ENCODE measurements at regions of chr11 and their contacts with region 1.

Region 1: DNA sequence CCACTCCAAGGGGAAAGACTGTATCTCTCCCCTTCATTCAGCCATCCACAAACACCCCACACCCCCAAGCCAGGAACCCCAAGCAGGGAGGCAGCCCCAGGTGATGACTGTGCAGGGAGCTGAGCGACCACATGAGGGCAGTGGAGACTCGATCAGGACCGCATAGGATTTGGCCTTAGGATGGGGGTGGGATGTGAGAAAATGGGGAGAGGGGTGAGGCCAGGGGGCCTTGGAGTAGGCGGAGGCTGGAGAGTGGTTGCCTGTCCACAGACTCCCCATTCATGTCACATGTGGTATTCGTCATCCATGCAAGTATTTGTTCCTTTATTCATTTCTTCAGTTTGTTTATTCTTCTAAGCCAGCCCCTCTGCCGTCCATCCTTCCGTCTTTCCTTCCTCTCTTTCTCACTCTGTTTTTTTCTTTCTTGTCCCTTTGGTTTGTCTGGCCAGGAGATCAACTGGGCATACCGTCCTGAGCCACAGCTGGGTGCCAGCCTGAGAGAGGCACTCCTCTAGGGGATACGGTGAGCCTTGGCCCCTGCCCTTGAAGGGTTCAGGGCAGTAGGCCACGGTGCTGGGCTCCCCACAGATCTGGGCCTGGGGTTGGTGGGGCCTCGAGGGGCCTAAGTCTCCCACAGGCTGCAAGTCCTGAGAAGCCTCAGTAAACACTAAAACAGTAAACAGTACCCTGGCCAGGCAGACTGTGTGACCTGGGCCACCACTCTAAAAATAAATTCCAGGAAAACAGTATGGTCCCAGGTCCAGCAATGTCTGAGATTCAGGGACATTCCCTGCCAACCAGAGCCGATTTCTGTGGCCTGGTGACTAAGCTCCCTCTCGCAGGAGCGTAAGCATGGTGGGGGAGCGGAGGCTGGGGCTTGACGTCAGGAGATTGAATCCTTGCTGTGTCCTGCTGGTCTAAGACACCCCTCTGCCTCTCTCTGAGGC is 2.5 kb upstream of the RHOD start:
- DNase-seq: peak; percentile 28
- H3K4me3 Mint-ChIP-seq: no peak overlapping the region
- H3K27ac Mint-ChIP-seq: no peak overlapping the region
- H3K4me1 Mint-ChIP-seq: peaks cover 11% of the 10 kb centered on the region
- H3K27me3 Mint-ChIP-seq: peaks cover 12% of the 10 kb centered on the region

Region 2: GRCh38 chr11:67071420-67072284 is 17.5 kb after region 1 on chr11:
- intact Hi-C with region 1: loop called (anchors 1 kb)
- DNase-seq: peak; percentile 65
- H3K4me3 Mint-ChIP-seq: peak overlapping the region; percentile 37
- H3K27ac Mint-ChIP-seq: no peak overlapping the region
- H3K4me1 Mint-ChIP-seq: no peaks in the 10 kb centered on the region
- H3K27me3 Mint-ChIP-seq: peaks cover 11% of the 10 kb centered on the region

Region 3: GRCh38 chr11:67082035-67082791 is 28.0 kb after region 1 on chr11:
- intact Hi-C with region 1: loop called (anchors 1 kb)
- DNase-seq: no peak
- H3K4me3 Mint-ChIP-seq: no peak overlapping the region
- H3K27ac Mint-ChIP-seq: peak overlapping the region; percentile 12
- H3K4me1 Mint-ChIP-seq: peaks cover 12% of the 10 kb centered on the region
- H3K27me3 Mint-ChIP-seq: peaks cover 2% of the 10 kb centered on the region

Region 4: DNA sequence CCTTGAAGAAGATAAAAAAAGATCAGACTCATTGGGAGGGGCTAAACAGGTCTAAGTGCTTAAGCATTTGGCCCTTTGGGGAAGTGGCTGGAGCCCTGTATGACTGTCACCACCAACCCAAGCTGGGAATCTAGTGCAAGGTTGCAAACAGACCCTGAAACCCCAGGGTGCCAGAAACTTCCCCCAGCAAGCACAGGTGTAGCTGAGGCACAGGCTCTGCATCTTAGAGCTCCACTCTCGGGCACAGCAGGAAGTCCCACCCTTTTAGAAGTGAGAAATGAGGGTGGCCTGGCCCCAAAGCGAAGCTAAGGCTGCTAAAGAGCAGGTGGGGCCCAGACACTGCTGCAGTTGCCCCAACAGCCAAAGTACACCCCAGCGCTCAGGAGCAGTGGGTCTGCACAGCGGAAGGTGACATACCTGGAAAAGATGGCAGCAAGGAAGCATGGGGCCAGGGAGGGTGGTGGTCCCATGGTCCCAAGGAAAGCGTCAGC is 59.1 kb after region 1 on chr11:
- intact Hi-C with region 1: no loop called
- DNase-seq: no peak
- H3K4me3 Mint-ChIP-seq: no peak overlapping the region
- H3K27ac Mint-ChIP-seq: no peak overlapping the region
- H3K4me1 Mint-ChIP-seq: peaks cover 7% of the 10 kb centered on the region
- H3K27me3 Mint-ChIP-seq: peaks cover 6% of the 10 kb centered on the region

Region 5: GRCh38 chr11:67158221-67158620 is 104.1 kb after region 1 on chr11:
- intact Hi-C with region 1: no loop called
- DNase-seq: no peak
- H3K4me3 Mint-ChIP-seq: no peak overlapping the region
- H3K27ac Mint-ChIP-seq: peak overlapping the region; percentile 53
- H3K4me1 Mint-ChIP-seq: peaks cover 17% of the 10 kb centered on the region
- H3K27me3 Mint-ChIP-seq: no peaks in the 10 kb centered on the region

Region 6: DNA sequence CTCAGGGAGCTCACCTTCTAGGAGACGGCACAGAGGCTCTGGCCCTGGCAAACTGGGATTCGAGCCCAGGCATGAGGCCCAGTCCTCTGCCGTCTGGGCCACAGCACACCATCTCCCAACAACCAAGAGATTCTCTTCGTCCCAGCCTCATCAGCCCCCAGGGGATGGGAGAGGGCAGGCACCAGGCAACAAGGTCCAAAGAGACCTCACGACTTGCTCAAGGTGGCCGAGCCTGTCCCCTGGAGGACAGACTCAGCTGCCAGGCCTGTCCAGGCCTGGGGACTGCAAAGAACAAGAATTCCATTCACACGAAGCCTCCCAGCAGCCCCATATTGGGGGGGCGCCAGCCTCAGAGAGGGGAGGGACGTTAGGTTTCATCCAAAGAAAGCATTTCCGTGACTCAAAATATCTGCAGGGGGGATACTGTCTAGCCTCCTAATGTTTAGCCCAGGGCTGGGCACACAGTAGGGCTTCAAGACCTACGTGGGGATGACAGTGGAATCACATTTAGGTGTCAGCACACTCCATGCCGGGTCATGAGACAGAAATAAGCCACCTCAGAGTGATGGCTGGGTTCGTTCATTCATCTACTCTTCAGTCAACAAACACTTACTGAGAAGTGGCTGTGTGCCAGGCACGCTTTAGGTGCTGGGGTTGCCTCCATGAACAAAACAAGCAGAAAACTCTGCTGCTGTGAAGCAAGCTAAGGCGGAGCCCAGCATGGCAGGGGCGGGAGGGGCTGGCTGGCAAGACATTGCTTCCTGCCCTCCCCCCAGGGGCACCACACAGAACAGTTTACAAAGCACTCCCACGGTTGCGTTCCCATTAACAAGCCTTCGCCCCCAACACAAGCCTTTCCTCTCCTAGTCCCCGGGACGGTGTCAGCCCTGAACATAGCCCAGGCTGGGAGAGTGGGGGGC is 362.5 kb after region 1 on chr11:
- intact Hi-C with region 1: no loop called
- DNase-seq: no peak
- H3K4me3 Mint-ChIP-seq: peak overlapping the region; percentile 47
- H3K27ac Mint-ChIP-seq: no peak overlapping the region
- H3K4me1 Mint-ChIP-seq: peaks cover 37% of the 10 kb centered on the region
- H3K27me3 Mint-ChIP-seq: peaks cover 14% of the 10 kb centered on the region